BJ (cell line): ENCODE measurements at regions of chr15 and their contacts with region 1.

Region 1: GRCh38 chr15:26889298-26889898 is 22.5 kb downstream of the GABRA5 start:
- DNase-seq: peak; percentile 4
- H3K4me3 ChIP-seq: no peak overlapping the region
- H3K27me3 ChIP-seq: no peaks in the 10 kb centered on the region
- CTCF ChIP-seq: peak; percentile 54

Region 2: DNA sequence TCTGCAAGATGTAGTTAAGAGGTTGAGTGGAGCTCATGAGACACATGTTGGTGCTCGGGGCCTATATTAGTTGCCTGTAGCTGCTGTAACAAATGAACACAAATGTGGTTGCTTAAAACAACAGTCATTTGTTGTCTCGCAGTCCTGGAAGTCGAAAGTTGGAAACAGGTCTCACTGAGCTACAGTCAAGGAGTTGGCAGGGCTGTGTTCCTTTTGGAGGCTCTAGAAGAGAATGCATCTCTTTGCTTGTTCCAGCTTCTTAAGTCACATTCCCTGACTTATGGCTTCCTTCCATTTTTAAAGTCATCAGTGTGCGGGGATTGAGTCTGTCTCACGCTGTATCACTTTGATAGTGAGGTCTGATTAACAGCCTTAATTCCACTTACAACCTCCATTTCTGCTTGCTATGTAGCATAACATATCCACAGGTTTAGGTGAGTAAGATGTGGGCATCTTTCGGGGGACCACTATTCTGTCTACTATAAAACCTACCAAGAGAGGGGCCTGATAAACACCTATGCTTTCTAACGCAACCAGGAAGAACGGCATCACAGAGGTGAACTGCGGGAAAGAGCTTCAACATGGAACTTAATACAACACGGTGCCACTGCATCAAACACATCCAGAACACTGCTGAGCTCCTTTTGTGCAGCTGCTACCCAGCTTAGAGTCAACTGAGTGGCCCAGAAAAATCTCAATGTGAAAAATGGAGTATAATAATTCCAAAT is 1145.7 kb before region 1 on chr15:
- CTCF ChIA-PET with region 1: no interaction called
- POLR2A ChIA-PET with region 1: interaction called, 11 read pairs
- DNase-seq: no peak
- H3K4me3 ChIP-seq: no peak overlapping the region
- H3K27me3 ChIP-seq: no peaks in the 10 kb centered on the region
- CTCF ChIP-seq: no peak

Region 3: DNA sequence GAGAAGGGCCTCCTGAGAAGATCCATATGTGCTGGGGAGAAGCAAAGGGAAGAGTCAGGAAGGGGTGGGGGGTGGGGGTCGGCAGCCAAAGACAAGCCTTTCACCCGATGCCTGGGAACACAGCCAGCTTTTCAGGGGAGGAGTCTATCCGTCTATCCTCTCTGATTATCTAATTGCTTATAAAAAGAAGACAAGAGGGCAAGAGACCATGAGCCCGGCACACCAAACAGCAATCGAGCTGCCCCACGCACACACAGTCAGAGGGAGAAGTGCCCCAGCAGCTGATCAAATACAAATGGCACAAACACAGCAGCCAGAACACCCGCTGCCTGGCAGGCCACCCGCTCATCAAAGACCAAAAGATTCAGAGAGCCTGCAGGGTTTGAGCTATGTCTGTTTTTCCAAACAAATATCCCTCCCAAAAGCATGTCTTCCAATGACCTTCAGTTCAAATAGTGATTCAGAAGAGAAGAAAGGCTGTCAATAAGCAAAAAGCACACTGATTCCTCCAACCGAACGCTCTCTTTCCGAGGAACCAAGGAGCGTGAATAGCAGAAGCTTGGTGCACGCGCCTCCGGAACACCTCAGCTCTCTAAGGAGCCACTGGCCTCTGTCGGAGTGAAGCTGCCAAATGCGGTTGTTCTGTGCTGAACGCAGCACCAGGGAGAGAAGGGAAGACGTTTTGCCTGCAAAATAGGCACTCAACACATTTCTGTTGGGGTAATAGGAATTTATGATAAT is 790.5 kb after region 1 on chr15:
- CTCF ChIA-PET with region 1: no interaction called
- POLR2A ChIA-PET with region 1: no interaction called
- DNase-seq: no peak
- H3K4me3 ChIP-seq: no peak overlapping the region
- H3K27me3 ChIP-seq: no peaks in the 10 kb centered on the region
- CTCF ChIP-seq: no peak